Upper lobe of right lung (tissue), 1 donor: ENCODE measurements at regions of chr1 and their contacts with region 1.

Region 1: GRCh38 chr1:65235867-65236805 is 73.2 kb upstream of the DNAJC6 start:
- DNase-seq: no peak
- ATAC-seq: peak; percentile 54
- H3K4me3 ChIP-seq: no peak overlapping the region
- H3K27ac ChIP-seq: no peak overlapping the region
- H3K4me1 ChIP-seq: no peaks in the 10 kb centered on the region
- H3K27me3 ChIP-seq: no peaks in the 10 kb centered on the region
- CTCF ChIP-seq: peak; percentile 73

Region 2: DNA sequence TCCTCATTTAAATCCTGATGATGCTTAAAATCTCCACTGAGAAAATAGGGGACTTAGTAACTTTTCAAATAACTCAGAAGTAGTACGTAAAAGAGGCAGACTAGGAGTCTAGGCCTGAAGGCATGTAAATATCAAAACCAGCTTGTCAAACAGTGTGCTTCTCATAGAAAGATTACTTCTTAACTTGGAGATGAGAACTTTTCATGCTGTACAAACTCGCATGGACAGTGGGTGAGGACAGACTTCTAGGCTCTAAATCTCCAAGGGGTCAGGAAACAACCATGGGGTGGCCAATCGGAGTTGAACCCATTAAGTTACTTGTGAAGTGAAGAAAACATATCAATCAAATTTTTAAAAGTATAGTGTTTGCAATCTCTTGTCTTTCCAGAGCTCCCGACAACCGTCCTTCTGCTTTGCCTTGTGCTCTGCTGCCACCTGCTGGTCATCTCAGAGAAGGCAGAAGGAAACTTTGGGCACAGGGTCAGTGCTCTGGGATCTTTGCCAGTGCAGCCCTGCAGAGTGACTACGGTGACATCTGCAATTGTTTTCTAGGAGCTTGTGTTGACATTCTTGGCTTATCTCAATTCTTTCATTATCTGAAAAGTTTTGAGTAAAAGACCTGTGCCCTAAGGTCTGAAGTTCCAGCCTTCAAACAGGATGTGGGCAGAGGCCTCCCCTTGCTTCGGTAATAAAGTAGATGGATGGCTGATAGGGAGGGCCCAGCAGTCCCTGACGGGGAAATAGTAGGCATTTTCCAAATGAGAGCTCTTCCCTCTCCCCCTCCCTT is 451.5 kb after region 1 on chr1:
- intact Hi-C with region 1: loop called (anchors 10 kb)
- DNase-seq: peak; percentile 85
- ATAC-seq: peak; percentile 97
- H3K4me3 ChIP-seq: no peak overlapping the region
- H3K27ac ChIP-seq: no peak overlapping the region
- H3K4me1 ChIP-seq: peaks cover 23% of the 10 kb centered on the region
- H3K27me3 ChIP-seq: no peaks in the 10 kb centered on the region
- CTCF ChIP-seq: peak; percentile 97